ENCODE measurements at regions of chr4 and their contacts with region 1.

Region 1: GRCh38 chr4:38675146-38676121 is 11.4 kb downstream of the KLF3 start:
- DNase-seq: peak; percentile 73 to 91 (median 86)
- ATAC-seq: peak; percentile 59
- H3K4me3 ChIP-seq: peak overlapping the region in 1 of 2 experiments; percentile 15
- H3K4me3 Mint-ChIP-seq: peak overlapping the region; percentile 71
- H3K27ac ChIP-seq: peak overlapping the region in 1 of 2 experiments; percentile 66
- H3K27ac Mint-ChIP-seq: peak overlapping the region; percentile 93
- H3K4me1 ChIP-seq: peaks cover 79% of the 10 kb centered on the region
- H3K4me1 Mint-ChIP-seq: peaks cover 88% of the 10 kb centered on the region
- H3K27me3 ChIP-seq: no peaks in the 10 kb centered on the region
- H3K27me3 Mint-ChIP-seq: no peaks in the 10 kb centered on the region
- CTCF ChIP-seq: peak; percentile 92

Region 2: GRCh38 chr4:38319456-38320342 is 355.7 kb before region 1 on chr4:
- CTCF ChIA-PET with region 1: interaction called, 143 read pairs
- POLR2A ChIA-PET with region 1: interaction called, 17 read pairs
- intact Hi-C with region 1: loop called (anchors 1 kb)
- DNase-seq: peak; percentile 83 to 98 (median 90)
- ATAC-seq: peak; percentile 88
- H3K4me3 ChIP-seq: peak overlapping the region; percentile 43 to 51
- H3K4me3 Mint-ChIP-seq: peak overlapping the region; percentile 82
- H3K27ac ChIP-seq: peak overlapping the region; percentile 33 to 78
- H3K27ac Mint-ChIP-seq: peak overlapping the region; percentile 90
- H3K4me1 ChIP-seq: peaks cover 39% of the 10 kb centered on the region
- H3K4me1 Mint-ChIP-seq: peaks cover 62% of the 10 kb centered on the region
- H3K27me3 ChIP-seq: no peaks in the 10 kb centered on the region
- H3K27me3 Mint-ChIP-seq: no peaks in the 10 kb centered on the region
- CTCF ChIP-seq: peak; percentile 96

Region 3: GRCh38 chr4:38509551-38509950 is 165.9 kb before region 1 on chr4:
- CTCF ChIA-PET with region 1: interaction called, 17 read pairs
- POLR2A ChIA-PET with region 1: interaction called, 3 read pairs
- intact Hi-C with region 1: loop called in 1 of 2 experiments (anchors 5 kb)
- DNase-seq: peak; percentile 16 to 86 (median 58)
- ATAC-seq: peak; percentile 93
- H3K4me3 ChIP-seq: peak overlapping the region; percentile 52 to 54
- H3K4me3 Mint-ChIP-seq: peak overlapping the region; percentile 88
- H3K27ac ChIP-seq: peak overlapping the region; percentile 40 to 73
- H3K27ac Mint-ChIP-seq: peak overlapping the region; percentile 90
- H3K4me1 ChIP-seq: peaks cover 72% of the 10 kb centered on the region
- H3K4me1 Mint-ChIP-seq: peaks cover 90% of the 10 kb centered on the region
- H3K27me3 ChIP-seq: no peaks in the 10 kb centered on the region
- H3K27me3 Mint-ChIP-seq: no peaks in the 10 kb centered on the region
- CTCF ChIP-seq: no peak

Region 4: DNA sequence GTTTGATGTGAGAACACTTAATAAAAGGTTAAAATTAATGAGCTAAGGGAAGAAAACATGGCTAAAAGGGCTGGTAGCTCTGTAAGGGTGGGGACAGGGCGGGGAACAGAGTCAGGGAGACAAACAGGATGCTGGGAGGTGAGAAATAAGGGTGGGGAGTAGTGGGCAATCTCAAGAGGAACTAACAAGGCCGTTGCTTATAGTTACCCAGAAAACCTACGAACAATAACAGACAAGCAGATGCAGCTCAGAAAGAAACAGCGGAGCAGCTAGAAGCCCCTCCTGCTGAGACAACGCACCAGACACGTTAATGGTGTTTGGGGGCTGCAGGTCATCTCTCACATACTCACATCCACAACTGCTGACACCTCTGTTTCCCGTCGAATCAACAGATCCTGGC is 21.2 kb before region 1 on chr4:
- CTCF ChIA-PET with region 1: interaction called, 4 read pairs
- POLR2A ChIA-PET with region 1: interaction called, 4 read pairs
- intact Hi-C with region 1: loop called in 1 of 2 experiments (anchors 1 kb)
- DNase-seq: peak in 7 of 9 experiments; percentile 38 to 94 (median 71)
- ATAC-seq: peak; percentile 72
- H3K4me3 ChIP-seq: peak overlapping the region; percentile 37 to 40
- H3K4me3 Mint-ChIP-seq: peak overlapping the region; percentile 72
- H3K27ac ChIP-seq: peak overlapping the region; percentile 92 to 98
- H3K27ac Mint-ChIP-seq: peak overlapping the region; percentile 99
- H3K4me1 ChIP-seq: peaks cover 57% of the 10 kb centered on the region
- H3K4me1 Mint-ChIP-seq: peaks cover 59% of the 10 kb centered on the region
- H3K27me3 ChIP-seq: no peaks in the 10 kb centered on the region
- H3K27me3 Mint-ChIP-seq: no peaks in the 10 kb centered on the region
- CTCF ChIP-seq: no peak

Region 5: DNA sequence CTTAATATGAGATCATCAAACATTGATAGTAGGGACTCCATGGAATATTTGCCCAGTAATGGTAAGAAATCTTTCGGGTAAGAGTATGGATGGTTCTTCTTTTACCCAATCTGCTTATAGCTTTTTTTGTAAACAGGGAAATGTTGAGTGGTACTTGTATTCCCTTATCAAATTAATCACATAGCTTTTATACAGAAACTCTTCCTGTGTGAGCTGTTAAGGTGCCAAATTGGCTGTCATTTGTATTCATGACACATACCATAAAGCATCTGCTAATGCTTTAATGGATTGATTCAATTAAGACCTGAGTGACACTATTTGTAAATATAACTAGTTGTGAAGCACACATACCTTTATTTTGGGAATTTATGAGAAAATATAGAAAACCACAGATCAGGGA is 22.7 kb after region 1 on chr4:
- CTCF ChIA-PET with region 1: interaction called, 10 read pairs
- POLR2A ChIA-PET with region 1: interaction called, 3 read pairs
- intact Hi-C with region 1: no loop called
- DNase-seq: no peak
- ATAC-seq: no peak
- H3K4me3 ChIP-seq: no peak overlapping the region
- H3K4me3 Mint-ChIP-seq: no peak overlapping the region
- H3K27ac ChIP-seq: no peak overlapping the region
- H3K27ac Mint-ChIP-seq: no peak overlapping the region
- H3K4me1 ChIP-seq: no peaks in the 10 kb centered on the region
- H3K4me1 Mint-ChIP-seq: peaks cover 4% of the 10 kb centered on the region
- H3K27me3 ChIP-seq: no peaks in the 10 kb centered on the region
- H3K27me3 Mint-ChIP-seq: no peaks in the 10 kb centered on the region
- CTCF ChIP-seq: no peak